Left cardiac atrium (tissue), 4 donors: ENCODE measurements at regions of chr13 and their contacts with region 1.

Region 1: DNA sequence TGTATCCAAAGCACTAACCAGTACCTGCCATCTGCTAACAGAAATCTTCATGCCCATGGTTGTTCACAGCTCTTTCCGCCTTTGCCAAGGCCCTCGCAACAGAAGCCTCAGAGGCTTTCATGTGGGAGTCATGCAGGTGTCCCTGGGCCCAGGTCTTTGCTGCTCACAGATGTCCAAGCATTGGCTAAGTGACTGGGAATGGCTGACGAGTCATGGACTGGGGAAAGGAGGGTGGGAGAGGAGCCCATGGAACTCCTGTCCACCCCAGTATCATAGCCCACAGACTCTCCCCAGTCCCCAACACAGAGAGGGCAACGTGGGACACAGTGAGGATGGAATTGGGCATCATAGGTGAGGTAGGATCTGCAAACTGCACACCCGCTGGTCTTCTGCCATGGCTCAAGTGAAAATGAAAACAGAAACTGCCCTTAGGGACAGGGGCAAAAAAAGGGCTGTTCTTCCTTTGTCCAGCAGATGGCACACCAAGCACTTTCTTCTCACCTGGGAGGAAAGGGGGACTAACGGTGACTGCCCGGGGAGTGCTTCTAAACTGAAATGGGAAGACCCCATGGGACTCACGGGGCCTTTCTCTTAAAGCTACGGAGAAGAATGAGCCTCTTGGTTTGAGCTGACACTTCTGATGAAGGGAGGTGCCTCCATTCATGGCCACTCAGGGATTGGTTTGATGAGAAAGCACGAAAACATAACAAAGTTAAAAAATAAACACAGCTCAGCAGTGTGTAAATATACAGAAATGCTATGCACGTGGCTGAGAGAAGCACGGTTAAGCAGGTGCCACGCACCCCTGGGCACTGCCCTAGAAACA is 11.1 kb upstream of the DHRS12 start:
- DNase-seq: peak; percentile 56
- ATAC-seq: peak; percentile 66 to 67

Region 2: GRCh38 chr13:51832471-51833152 is 17.6 kb after region 1 on chr13:
- intact Hi-C with region 1: loop called in 1 of 2 experiments (anchors 1 kb)
- DNase-seq: no peak
- ATAC-seq: peak; percentile 85 to 90

Region 3: DNA sequence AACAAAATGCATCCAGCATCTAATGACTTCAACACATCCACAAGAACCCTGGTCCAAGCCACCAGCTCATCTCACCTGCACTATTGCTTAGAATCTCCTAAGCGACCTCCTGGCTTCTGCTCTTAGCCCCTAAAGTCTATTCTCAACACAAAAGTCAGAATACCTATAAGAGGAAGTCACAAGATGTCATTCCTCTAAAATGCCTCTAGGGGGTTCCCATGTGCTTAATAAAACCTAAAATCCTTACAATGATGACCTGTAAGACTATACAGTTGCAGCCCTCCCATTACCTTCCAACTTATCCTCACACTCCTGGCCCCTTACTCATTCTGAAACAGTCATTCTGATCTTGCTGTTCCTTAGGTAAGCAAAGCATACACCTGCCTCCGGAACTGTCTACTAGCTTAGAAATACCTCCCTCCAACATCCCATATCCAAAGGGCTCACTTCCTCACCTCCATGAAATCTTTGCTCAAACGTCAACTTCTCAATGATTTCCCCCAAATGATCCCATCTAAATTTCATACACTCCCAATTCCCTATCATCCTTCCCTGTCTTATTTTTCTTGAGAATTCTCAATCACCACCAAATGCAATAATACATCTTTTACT is 186.2 kb after region 1 on chr13:
- intact Hi-C with region 1: no loop called
- DNase-seq: no peak
- ATAC-seq: peak in 1 of 2 donors; percentile 49